Ascending aorta (tissue), 2 donors: ENCODE measurements at regions of chr5 and their contacts with region 1.

Region 1: DNA sequence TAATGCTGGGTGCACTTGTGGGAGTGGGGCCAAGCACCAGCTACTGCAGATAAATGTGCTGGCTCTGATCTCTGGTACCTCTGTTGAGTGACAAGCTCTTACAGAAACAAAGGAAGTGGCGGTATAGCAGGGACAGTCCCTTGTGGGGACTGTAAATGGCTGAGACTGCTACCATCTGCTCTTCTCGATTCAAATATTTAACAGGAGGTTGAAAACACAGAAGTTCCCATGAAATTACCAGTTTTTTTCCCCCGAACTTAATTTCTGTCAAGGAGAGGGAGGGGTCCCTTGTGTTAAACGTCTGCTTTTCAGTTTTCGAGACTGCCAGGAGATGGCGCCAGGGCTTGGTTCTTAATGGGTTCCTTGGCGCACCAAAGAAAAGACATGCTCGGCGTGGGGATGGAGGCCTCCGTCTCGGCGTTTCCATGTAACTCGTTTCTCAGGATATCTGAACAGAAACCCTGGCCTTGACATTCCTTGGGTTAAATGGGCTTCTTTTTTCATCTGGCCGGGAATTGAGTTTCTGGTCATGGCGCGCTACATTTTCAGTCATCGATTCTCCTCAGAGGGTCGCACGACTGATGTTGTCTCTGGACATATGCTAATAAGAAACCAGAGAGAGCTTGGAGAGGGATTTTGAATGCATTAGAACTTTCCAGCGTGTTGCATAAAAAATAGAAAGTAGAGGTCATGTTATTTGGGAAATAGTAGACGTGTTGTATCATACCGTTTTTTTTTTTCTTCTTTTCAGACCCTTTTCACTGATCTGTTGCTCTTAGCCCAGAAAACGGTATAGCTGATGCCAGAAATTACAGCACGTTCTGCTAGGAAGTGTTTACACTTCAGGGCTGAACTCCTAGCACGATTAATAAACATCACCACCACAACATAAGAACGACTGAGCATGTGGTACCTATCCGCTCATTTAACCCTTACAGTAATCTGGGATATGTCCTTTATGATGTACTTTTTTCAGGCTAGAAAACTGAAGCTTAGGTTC is 64.0 kb downstream of the CARTPT start:
- DNase-seq: peak; percentile 14 to 92
- H3K4me3 ChIP-seq: peak overlapping the region; percentile 41 to 49
- H3K27ac ChIP-seq: peak overlapping the region; percentile 76 to 77
- H3K4me1 ChIP-seq: peaks cover 9 to 10% of the 10 kb centered on the region in 2 donors
- H3K27me3 ChIP-seq: no peaks in the 10 kb centered on the region
- CTCF ChIP-seq: peak; percentile 78 to 86 (median 81)

Region 2: DNA sequence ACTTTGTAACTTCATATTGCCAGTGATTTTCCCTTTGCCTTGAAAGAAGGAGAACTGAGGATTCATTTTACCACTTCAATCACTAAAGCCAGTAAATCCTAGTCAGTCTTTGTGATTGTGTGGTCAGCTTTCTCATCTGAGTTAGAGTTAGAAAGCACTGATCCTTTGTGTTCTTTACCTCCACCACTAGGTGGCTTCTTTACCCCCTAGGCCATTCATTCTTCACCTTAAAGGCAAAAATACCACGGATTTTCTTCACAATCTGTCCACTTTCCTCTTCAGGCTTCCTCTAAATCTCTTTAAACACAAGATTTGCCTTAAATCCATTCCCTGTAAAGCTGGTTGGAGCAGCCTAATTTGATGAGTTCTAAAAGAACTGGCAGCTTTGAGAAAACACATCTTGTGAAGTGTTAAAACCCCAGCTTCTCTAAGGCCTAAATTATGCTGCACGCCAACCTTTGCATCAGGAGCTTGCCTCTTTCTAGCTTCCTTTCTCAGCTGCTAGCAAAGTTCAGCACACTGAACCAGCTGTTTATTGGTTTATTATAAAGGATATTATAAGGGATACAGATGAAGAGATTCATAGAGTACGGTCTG is 307.2 kb before region 1 on chr5:
- intact Hi-C with region 1: no loop called
- DNase-seq: no peak
- H3K4me3 ChIP-seq: no peak overlapping the region
- H3K27ac ChIP-seq: no peak overlapping the region
- H3K4me1 ChIP-seq: no peaks in the 10 kb centered on the region
- H3K27me3 ChIP-seq: no peaks in the 10 kb centered on the region
- CTCF ChIP-seq: peak in 2 of 3 experiments; percentile 13 to 28

Region 3: DNA sequence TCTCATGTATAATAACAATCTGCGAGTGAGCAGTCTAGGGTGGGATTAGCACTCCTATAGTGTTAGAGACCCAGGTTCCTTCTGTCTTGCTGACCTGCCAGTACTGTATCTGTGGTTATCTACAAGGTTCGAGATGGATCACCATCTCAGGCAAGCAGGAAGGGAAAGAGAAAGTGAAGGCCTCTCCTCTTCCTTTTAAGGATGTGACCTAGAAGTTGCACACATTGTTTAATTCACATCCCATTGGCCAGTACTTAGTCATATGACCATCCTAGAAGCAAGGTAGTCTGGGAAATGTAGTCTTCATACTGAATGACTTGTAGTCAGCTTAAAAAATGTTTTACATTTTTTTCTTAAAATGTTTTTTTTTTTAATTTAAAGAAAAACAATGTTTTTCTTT is 104.6 kb after region 1 on chr5:
- intact Hi-C with region 1: loop called (anchors 5 kb)
- DNase-seq: no peak
- H3K4me3 ChIP-seq: no peak overlapping the region
- H3K27ac ChIP-seq: peak overlapping the region in 1 of 2 donors; percentile 27
- H3K4me1 ChIP-seq: peaks cover 3 to 10% of the 10 kb centered on the region in 2 donors
- H3K27me3 ChIP-seq: no peaks in the 10 kb centered on the region
- CTCF ChIP-seq: no peak

Region 4: DNA sequence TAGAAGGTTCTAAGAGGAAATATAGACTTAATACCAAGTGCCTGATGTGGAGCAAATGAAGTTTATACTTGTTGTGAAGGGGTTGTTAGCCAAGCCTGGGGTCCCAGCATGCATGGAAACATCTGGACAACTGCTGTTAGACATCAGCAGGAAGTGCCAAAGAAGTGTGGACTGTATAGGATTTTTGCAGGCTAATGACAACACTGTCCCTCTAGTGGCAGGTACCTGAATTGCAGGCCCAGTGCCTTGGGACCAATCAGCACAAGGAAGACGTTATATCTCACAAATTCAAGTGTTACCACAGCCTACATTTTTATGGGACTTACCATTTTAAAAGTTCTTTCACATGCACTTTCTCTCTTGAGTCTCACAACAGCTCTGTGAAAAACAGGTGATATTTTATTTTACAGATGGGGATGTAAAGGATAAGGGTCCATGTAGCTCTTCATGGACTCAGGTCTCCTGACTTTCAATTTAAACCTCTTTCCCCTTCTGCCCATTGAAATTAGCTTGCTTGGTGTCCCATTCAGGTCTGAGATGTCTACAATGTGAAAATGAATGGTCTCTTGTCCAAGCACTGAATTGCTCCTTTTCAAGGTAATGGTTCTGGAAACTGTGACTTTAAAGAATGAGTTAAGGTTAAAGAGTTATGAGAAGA is 235.2 kb after region 1 on chr5:
- intact Hi-C with region 1: loop called (anchors 1 kb)
- DNase-seq: no peak
- H3K4me3 ChIP-seq: no peak overlapping the region
- H3K27ac ChIP-seq: no peak overlapping the region
- H3K4me1 ChIP-seq: peaks cover 0 to 2% of the 10 kb centered on the region in 2 donors
- H3K27me3 ChIP-seq: no peaks in the 10 kb centered on the region
- CTCF ChIP-seq: peak; percentile 59 to 81 (median 77)

Region 5: GRCh38 chr5:72209515-72210115 is 426.5 kb after region 1 on chr5:
- intact Hi-C with region 1: loop called (anchors 10 kb)
- DNase-seq: no peak
- H3K4me3 ChIP-seq: no peak overlapping the region
- H3K27ac ChIP-seq: peak overlapping the region; percentile 69 to 77
- H3K4me1 ChIP-seq: peaks cover 0 to 17% of the 10 kb centered on the region in 2 donors
- H3K27me3 ChIP-seq: no peaks in the 10 kb centered on the region
- CTCF ChIP-seq: no peak